CD4-positive, alpha-beta memory T cell (primary cell): ENCODE measurements at regions of chr5 and their contacts with region 1.

Region 1: GRCh38 chr5:43484106-43484849 is 613 bp upstream of the TMEM267 start:
- DNase-seq: peak; percentile 85 to 89 (median 87)
- H3K4me3 ChIP-seq: peak overlapping the region; percentile 50 to 59
- H3K4me3 Mint-ChIP-seq: peak overlapping the region; percentile 96 to 99 (median 98)
- H3K27ac ChIP-seq: peak overlapping the region; percentile 92
- H3K27ac Mint-ChIP-seq: peak overlapping the region; percentile 98 to 100 (median 100)
- H3K4me1 ChIP-seq: peaks cover 40% of the 10 kb centered on the region
- H3K4me1 Mint-ChIP-seq: peaks cover 21 to 57% (median 31%) of the 10 kb centered on the region in 4 donors
- H3K27me3 ChIP-seq: no peaks in the 10 kb centered on the region
- H3K27me3 Mint-ChIP-seq: no peaks in the 10 kb centered on the region

Region 2: DNA sequence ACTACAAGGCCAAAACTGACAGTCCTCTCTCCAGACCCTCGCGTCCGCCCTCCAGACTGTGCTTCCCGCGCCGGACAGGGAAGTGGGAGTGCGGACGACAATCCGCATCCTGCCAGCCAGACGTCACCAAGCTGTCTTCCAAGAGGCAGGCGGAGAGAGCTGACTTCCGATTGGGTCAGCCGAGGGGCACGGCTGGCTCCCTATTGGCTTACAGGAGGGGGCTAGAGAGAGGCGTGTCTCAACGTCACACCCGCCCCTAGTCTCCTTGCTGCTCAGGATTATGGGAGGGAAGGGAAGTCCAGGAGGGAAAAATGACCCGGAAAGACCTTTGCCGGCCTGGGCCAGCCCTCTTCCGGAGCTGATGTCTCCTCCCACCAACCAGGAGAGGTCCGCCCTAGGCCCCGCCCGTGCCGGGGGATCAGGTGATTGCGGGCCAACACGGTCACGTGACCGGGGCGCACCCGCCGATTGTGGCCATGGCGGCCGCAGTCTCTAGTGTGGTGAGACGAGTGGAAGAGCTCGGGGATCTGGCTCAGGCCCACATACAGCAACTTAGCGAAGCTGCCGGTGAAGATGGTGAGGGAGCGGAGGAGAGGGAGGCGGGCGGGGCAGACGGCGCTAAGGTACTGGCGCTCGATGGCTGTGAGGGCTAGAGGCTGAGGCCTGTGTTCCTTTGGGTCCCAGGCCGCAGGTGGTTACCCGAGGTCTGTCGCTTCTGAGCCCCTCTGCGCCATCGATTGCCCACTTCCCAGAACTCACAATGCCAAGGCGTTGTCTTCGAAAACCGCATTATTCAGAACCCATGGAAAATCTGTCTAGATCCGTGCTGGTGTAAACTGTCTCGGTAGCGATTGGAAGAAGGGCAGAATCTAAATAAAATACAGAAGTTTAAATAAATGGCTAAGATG is 1580.1 kb before region 1 on chr5 and contains the start of gene RIMOC1:
- CTCF ChIA-PET with region 1: interaction called, 4 read pairs
- POLR2A ChIA-PET with region 1: interaction called, 27 read pairs
- intact Hi-C with region 1: loop called (anchors 1 kb)
- DNase-seq: peak; percentile 96 to 98 (median 98)
- H3K4me3 ChIP-seq: peak within 1 kb of the TSS; percentile 82 to 90
- H3K4me3 Mint-ChIP-seq: peak within 1 kb of the TSS; percentile 93 to 99 (median 98)
- H3K27ac ChIP-seq: peak within 1 kb of the TSS; percentile 74
- H3K27ac Mint-ChIP-seq: peak within 1 kb of the TSS; percentile 96 to 100 (median 97)
- H3K4me1 ChIP-seq: peaks cover 16% of the 10 kb centered on the region
- H3K4me1 Mint-ChIP-seq: peaks cover 22 to 48% (median 29%) of the 10 kb centered on the region in 4 donors
- H3K27me3 ChIP-seq: no peaks in the 10 kb centered on the region
- H3K27me3 Mint-ChIP-seq: peaks cover 0 to 2% of the 10 kb centered on the region in 2 donors
- total RNA-seq, gene RIMOC1: 33.1 to 33.7 TPM

Region 3: GRCh38 chr5:42994246-42995151 is 489.8 kb before region 1 on chr5:
- CTCF ChIA-PET with region 1: interaction called, 13 read pairs
- POLR2A ChIA-PET with region 1: interaction called, 86 read pairs
- intact Hi-C with region 1: loop called (anchors 1 kb)
- DNase-seq: peak; percentile 86 to 89 (median 88)
- H3K4me3 ChIP-seq: peak overlapping the region; percentile 72 to 76
- H3K4me3 Mint-ChIP-seq: peak overlapping the region; percentile 93 to 100 (median 100)
- H3K27ac ChIP-seq: peak overlapping the region; percentile 93
- H3K27ac Mint-ChIP-seq: peak overlapping the region; percentile 98 to 100 (median 100)
- H3K4me1 ChIP-seq: peaks cover 34% of the 10 kb centered on the region
- H3K4me1 Mint-ChIP-seq: peaks cover 14 to 69% (median 26%) of the 10 kb centered on the region in 4 donors
- H3K27me3 ChIP-seq: no peaks in the 10 kb centered on the region
- H3K27me3 Mint-ChIP-seq: no peaks in the 10 kb centered on the region

Region 4: DNA sequence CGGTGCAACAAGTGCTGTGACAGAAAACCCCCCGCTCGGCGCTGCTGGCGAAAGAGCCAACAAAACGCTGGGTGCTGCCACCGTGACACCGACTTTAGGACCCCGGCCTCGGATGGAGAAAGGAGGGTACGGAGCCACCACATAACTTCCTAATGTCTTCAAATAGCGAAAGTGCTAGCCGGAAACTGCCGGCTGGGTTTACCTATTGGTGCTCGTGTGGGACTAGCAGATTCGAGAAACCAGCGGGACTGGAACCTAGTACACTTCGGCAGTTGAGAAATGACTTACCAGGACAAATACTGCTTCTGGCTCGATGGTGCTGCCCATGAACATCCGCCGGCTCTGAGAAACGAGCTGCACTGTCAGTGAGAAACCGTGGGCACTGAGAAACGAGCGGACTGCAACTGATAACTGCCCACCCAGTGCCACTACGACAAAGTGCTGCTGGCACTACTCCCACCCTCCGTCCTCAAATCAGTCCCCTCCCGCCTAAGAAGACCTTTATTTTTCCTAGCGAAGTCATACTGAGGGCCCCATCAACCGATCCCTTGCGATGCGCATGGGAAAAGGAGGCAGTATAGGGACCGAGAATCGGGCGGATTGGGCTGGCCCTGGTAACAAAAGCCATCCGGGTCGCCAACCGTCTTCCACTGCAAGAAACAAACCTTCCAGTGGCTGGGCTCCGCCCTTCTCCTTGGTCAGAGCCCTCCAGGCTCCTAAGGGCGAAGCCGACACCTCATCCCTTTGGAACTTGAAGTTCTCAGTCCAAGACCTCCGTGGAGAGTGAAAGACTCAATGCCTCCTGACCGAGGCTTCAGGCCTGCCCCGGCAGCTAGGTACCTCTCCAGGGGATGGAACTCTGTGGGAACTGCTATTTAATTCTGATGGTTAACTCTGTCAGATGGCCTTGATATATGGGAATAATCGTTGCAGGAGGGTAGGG is 417.2 kb before region 1 on chr5:
- CTCF ChIA-PET with region 1: interaction called, 6 read pairs
- POLR2A ChIA-PET with region 1: interaction called, 65 read pairs
- intact Hi-C with region 1: loop called (anchors 2 kb)
- DNase-seq: peak; percentile 88 to 92 (median 90)
- H3K4me3 ChIP-seq: peak overlapping the region; percentile 97 to 99
- H3K4me3 Mint-ChIP-seq: peak overlapping the region; percentile 97 to 100 (median 98)
- H3K27ac ChIP-seq: peak overlapping the region; percentile 94
- H3K27ac Mint-ChIP-seq: peak overlapping the region; percentile 98 to 100 (median 99)
- H3K4me1 ChIP-seq: peaks cover 46% of the 10 kb centered on the region
- H3K4me1 Mint-ChIP-seq: peaks cover 31 to 59% (median 43%) of the 10 kb centered on the region in 4 donors
- H3K27me3 ChIP-seq: no peaks in the 10 kb centered on the region
- H3K27me3 Mint-ChIP-seq: no peaks in the 10 kb centered on the region

Region 5: GRCh38 chr5:43313035-43313853 is 171.0 kb before region 1 on chr5 and contains the start of gene HMGCS1:
- CTCF ChIA-PET with region 1: interaction called, 40 read pairs
- POLR2A ChIA-PET with region 1: interaction called, 107 read pairs
- intact Hi-C with region 1: loop called (anchors 1 kb)
- DNase-seq: peak; percentile 99 to 100 (median 99)
- H3K4me3 ChIP-seq: peak within 1 kb of the TSS; percentile 59 to 96
- H3K4me3 Mint-ChIP-seq: peak within 1 kb of the TSS; percentile 95 to 99 (median 98)
- H3K27ac ChIP-seq: peak within 1 kb of the TSS; percentile 95
- H3K27ac Mint-ChIP-seq: peak within 1 kb of the TSS; percentile 78 to 99 (median 98)
- H3K4me1 ChIP-seq: peaks cover 21% of the 10 kb centered on the region
- H3K4me1 Mint-ChIP-seq: peaks cover 19 to 39% (median 25%) of the 10 kb centered on the region in 4 donors
- H3K27me3 ChIP-seq: no peaks in the 10 kb centered on the region
- H3K27me3 Mint-ChIP-seq: no peaks in the 10 kb centered on the region
- total RNA-seq, gene HMGCS1: 27.7 to 35.7 TPM

Region 6: DNA sequence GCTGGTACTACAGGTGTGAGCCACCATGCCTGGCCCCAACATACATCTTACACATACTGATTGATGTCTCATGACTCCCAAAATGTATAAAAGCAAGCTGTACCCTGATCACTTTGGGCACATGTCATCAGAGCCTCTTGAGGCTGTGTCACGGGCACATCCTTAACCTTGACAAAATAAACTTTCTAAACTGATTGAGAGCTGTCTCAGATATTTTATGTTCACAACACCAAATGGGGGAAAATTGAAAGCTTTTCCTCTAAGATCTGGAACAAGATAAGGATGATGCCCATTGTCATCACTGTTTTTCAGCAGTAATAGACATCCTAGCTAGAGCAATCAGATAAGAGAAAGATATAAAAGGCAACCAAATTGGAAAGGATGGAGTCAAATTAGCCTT is 13.9 kb before region 1 on chr5:
- CTCF ChIA-PET with region 1: interaction called, 18 read pairs
- POLR2A ChIA-PET with region 1: interaction called, 11 read pairs
- intact Hi-C with region 1: no loop called
- DNase-seq: no peak
- H3K4me3 ChIP-seq: no peak overlapping the region
- H3K4me3 Mint-ChIP-seq: no peak overlapping the region
- H3K27ac ChIP-seq: no peak overlapping the region
- H3K27ac Mint-ChIP-seq: no peak overlapping the region
- H3K4me1 ChIP-seq: no peaks in the 10 kb centered on the region
- H3K4me1 Mint-ChIP-seq: peaks cover 12 to 45% (median 18%) of the 10 kb centered on the region in 4 donors
- H3K27me3 ChIP-seq: no peaks in the 10 kb centered on the region
- H3K27me3 Mint-ChIP-seq: no peaks in the 10 kb centered on the region

Region 7: GRCh38 chr5:43602461-43603343 is 118.4 kb after region 1 on chr5 and contains the start of gene NNT:
- CTCF ChIA-PET with region 1: interaction called, 30 read pairs
- POLR2A ChIA-PET with region 1: interaction called, 99 read pairs
- intact Hi-C with region 1: loop called (anchors 1 kb)
- DNase-seq: peak; percentile 75 to 84 (median 80)
- H3K4me3 ChIP-seq: peak within 1 kb of the TSS; percentile 91 to 99
- H3K4me3 Mint-ChIP-seq: peak within 1 kb of the TSS; percentile 90 to 98 (median 96)
- H3K27ac ChIP-seq: peak within 1 kb of the TSS; percentile 88
- H3K27ac Mint-ChIP-seq: peak within 1 kb of the TSS; percentile 91 to 98 (median 94)
- H3K4me1 ChIP-seq: peaks cover 38% of the 10 kb centered on the region
- H3K4me1 Mint-ChIP-seq: peaks cover 18 to 63% (median 49%) of the 10 kb centered on the region in 4 donors
- H3K27me3 ChIP-seq: no peaks in the 10 kb centered on the region
- H3K27me3 Mint-ChIP-seq: no peaks in the 10 kb centered on the region
- total RNA-seq, gene NNT: 56.1 to 57.6 TPM

Region 8: DNA sequence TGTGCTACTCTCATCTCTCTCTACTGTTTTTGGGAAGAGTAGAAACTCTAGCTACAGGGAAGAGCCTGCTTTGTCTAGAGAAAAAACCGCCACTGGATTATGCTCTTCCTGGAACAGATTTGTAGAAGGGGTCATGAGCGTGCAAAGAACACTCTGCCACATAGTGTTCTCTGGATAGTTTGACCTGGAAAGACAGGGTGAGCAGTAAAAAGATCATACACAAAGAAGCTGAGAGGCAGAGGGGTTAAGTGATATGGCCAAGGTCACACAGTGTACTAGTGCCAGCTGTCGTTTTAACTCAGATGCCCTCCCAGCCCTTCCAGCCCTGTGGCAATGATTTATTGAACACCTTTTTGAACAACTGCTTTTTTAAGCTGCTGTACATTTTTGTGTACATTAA is 300.9 kb after region 1 on chr5:
- CTCF ChIA-PET with region 1: no interaction called
- POLR2A ChIA-PET with region 1: no interaction called
- intact Hi-C with region 1: no loop called
- DNase-seq: no peak
- H3K4me3 ChIP-seq: no peak overlapping the region
- H3K4me3 Mint-ChIP-seq: no peak overlapping the region
- H3K27ac ChIP-seq: no peak overlapping the region
- H3K27ac Mint-ChIP-seq: no peak overlapping the region
- H3K4me1 ChIP-seq: no peaks in the 10 kb centered on the region
- H3K4me1 Mint-ChIP-seq: no peaks in the 10 kb centered on the region
- H3K27me3 ChIP-seq: no peaks in the 10 kb centered on the region
- H3K27me3 Mint-ChIP-seq: peaks cover 2 to 4% of the 10 kb centered on the region in 2 donors